Dorsolateral prefrontal cortex (tissue), 120 donors: ENCODE measurements at regions of chr1 and their contacts with region 1.

Region 1: DNA sequence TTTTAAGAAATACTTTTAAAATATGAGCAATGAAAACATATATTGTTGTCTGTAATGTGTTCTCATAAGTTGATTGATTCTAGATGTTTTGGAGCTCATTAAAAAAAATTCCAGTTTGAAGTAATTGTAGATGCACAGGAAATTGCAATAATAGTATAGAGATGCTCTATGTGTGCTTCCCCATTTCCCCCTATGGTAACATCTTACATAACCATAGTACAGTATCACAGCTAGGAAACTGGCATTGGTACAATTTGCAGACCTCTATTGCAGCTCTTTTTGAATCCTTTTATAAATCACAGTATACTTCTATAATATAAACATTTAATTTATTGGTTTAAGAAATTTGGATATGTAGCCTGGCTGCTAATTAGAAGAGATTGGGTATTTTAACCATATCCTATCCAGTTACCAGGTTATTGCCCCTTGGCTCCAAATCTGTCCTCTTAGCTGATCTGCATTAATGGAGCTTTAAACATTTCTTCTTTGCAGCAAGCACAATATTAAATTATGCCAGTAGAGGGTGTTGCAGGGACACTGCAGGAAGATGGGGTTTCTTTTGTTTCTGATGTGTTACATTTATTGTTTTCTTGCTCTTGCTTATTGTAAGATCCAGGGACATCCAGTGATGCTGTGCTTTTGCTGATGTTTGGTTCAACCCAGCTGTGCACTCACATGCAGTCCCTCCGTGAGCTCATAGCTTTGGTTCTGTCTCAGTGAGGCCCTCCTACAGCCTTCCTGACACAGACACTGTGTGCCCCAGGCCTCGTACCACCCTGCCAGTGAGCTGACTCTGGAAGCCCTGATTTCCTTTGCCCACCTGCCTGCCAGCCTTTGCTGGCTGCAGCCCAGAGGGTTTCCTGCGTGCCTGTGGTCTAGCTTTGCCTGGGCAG is 103.3 kb downstream of the RABGAP1L start:
- DNase-seq: peak in 9 of 10 donors; percentile 20 to 64 (median 47)
- H3K4me3 ChIP-seq: peak overlapping the region in 35 of 59 donors; percentile 3 to 58 (median 29)
- H3K27ac ChIP-seq: peak overlapping the region in 58 of 59 donors; percentile 18 to 95 (median 86)
- H3K27me3 ChIP-seq: no peaks in the 10 kb centered on the region
- CTCF ChIP-seq: peak; percentile 68 to 96 (median 85)

Region 2: GRCh38 chr1:174364996-174365736 is 102.6 kb after region 1 on chr1:
- intact Hi-C with region 1: loop called in 1 of 2 experiments (anchors 10 kb)
- DNase-seq: peak; percentile 21 to 71 (median 50)
- H3K4me3 ChIP-seq: peak overlapping the region in 27 of 59 donors; percentile 0 to 54 (median 22)
- H3K27ac ChIP-seq: peak overlapping the region in 58 of 59 donors; percentile 21 to 97 (median 90)
- H3K27me3 ChIP-seq: no peaks in the 10 kb centered on the region
- CTCF ChIP-seq: peak in 2 of 56 donors; percentile 3 to 12

Region 3: DNA sequence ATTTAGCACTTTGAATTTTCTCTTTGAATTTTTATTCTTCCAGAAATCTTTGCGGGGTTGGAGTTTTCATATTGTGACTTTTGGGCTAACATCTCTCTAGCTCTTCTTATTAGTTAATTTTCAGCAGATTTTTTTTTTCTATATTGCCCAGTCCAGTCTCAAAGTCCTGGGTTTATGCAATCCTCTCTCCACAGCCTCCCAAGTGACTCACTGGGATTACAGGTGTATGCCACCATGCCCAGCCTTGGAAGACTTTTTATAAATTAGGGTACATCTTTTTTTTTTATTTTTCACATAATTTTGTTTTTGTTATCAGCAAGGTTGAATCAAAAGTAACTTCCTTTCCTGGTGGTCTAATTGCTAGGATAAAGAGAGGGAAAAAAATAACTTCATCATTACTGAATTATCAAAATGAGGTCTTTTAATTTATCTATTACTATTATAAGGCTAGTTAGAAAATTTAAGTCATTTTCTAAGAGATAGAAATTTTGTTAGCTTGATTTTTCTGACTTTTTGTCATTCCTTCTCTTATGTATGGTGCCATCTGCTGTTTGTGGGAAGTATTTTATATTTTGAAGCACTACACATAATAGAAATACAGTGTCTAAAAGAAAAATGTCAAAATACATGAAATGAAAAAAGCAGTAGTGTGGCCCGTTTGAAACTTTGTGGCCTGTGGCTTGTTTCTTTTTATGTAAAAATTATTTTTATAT is 463.7 kb after region 1 on chr1:
- intact Hi-C with region 1: loop called (anchors 2 to 5 kb)
- DNase-seq: no peak
- H3K4me3 ChIP-seq: no peak overlapping the region
- H3K27ac ChIP-seq: no peak overlapping the region
- H3K27me3 ChIP-seq: no peaks in the 10 kb centered on the region
- CTCF ChIP-seq: peak; percentile 58 to 89 (median 76)

Region 4: GRCh38 chr1:174743654-174744561 is 481.3 kb after region 1 on chr1:
- intact Hi-C with region 1: loop called (anchors 2 to 5 kb)
- DNase-seq: no peak
- H3K4me3 ChIP-seq: peak overlapping the region in 2 of 59 donors; percentile 3 to 27
- H3K27ac ChIP-seq: no peak overlapping the region
- H3K27me3 ChIP-seq: no peaks in the 10 kb centered on the region
- CTCF ChIP-seq: peak; percentile 63 to 94 (median 82)